ENCODE measurements at regions of chr15 and their contacts with region 1.

Region 1: GRCh38 chr15:83011271-83012075 is at the start of gene C15orf40:
- DNase-seq: peak; percentile 89
- ATAC-seq: peak; percentile 88
- H3K4me3 Mint-ChIP-seq: peak within 1 kb of the TSS; percentile 97
- H3K27ac Mint-ChIP-seq: peak within 1 kb of the TSS; percentile 87
- H3K4me1 Mint-ChIP-seq: peaks cover 40% of the 10 kb centered on the region
- H3K27me3 Mint-ChIP-seq: no peaks in the 10 kb centered on the region
- CTCF ChIP-seq: no peak
- total RNA-seq, gene C15orf40: 33.3 and 41.9 TPM in 2 replicates

Region 2: GRCh38 chr15:82540055-82540983 is 471.2 kb before region 1 on chr15 and contains the start of gene RPS17:
- CTCF ChIA-PET with region 1: interaction called, 9 read pairs
- POLR2A ChIA-PET with region 1: interaction called, 37 read pairs
- intact Hi-C with region 1: loop called (anchors 1 kb)
- DNase-seq: peak; percentile 100
- ATAC-seq: peak; percentile 95
- H3K4me3 Mint-ChIP-seq: peak within 1 kb of the TSS; percentile 98
- H3K27ac Mint-ChIP-seq: peak within 1 kb of the TSS; percentile 97
- H3K4me1 Mint-ChIP-seq: peaks cover 34% of the 10 kb centered on the region
- H3K27me3 Mint-ChIP-seq: peaks cover 3% of the 10 kb centered on the region
- CTCF ChIP-seq: peak; percentile 88
- total RNA-seq, gene RPS17: 3,227 and 3,822 TPM in 2 replicates

Region 3: GRCh38 chr15:82749951-82750830 is 261.3 kb before region 1 on chr15:
- CTCF ChIA-PET with region 1: interaction called, 9 read pairs
- POLR2A ChIA-PET with region 1: interaction called, 11 read pairs
- intact Hi-C with region 1: loop called (anchors 1 kb)
- DNase-seq: peak; percentile 76
- ATAC-seq: peak; percentile 95
- H3K4me3 Mint-ChIP-seq: peak overlapping the region; percentile 100
- H3K27ac Mint-ChIP-seq: peak overlapping the region; percentile 94
- H3K4me1 Mint-ChIP-seq: peaks cover 44% of the 10 kb centered on the region
- H3K27me3 Mint-ChIP-seq: no peaks in the 10 kb centered on the region
- CTCF ChIP-seq: no peak

Region 4: DNA sequence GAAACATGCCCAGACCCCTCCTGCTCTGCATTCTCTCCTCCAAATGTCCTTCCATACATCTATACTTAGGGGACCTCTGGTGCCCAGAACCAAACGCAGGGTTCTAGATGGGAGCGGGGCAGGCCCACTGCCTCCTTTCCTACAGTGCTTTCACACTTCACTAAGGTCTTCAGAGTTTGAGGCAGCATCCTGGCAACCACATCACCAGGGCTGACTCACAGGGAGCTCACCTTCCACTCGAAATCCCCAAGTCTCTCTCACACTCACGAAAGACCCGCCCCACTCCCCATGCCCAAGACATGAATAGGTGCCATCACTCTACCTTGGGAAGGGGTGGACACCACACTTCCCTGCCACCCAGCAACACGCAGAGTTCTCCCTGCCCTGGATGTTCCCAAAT is 77.9 kb before region 1 on chr15:
- CTCF ChIA-PET with region 1: no interaction called
- POLR2A ChIA-PET with region 1: no interaction called
- intact Hi-C with region 1: no loop called
- DNase-seq: no peak
- ATAC-seq: no peak
- H3K4me3 Mint-ChIP-seq: no peak overlapping the region
- H3K27ac Mint-ChIP-seq: no peak overlapping the region
- H3K4me1 Mint-ChIP-seq: no peaks in the 10 kb centered on the region
- H3K27me3 Mint-ChIP-seq: no peaks in the 10 kb centered on the region
- CTCF ChIP-seq: no peak

Region 5: GRCh38 chr15:82985688-82986441 is 25.6 kb before region 1 on chr15 and contains the start of gene RAMAC:
- CTCF ChIA-PET with region 1: interaction called, 12 read pairs
- POLR2A ChIA-PET with region 1: interaction called, 32 read pairs
- intact Hi-C with region 1: loop called (anchors 1 kb)
- DNase-seq: peak; percentile 79
- ATAC-seq: peak; percentile 95
- H3K4me3 Mint-ChIP-seq: peak within 1 kb of the TSS; percentile 99
- H3K27ac Mint-ChIP-seq: peak within 1 kb of the TSS; percentile 92
- H3K4me1 Mint-ChIP-seq: peaks cover 23% of the 10 kb centered on the region
- H3K27me3 Mint-ChIP-seq: no peaks in the 10 kb centered on the region
- CTCF ChIP-seq: no peak
- total RNA-seq, gene RAMAC: 23.4 and 24.7 TPM in 2 replicates

Region 6: DNA sequence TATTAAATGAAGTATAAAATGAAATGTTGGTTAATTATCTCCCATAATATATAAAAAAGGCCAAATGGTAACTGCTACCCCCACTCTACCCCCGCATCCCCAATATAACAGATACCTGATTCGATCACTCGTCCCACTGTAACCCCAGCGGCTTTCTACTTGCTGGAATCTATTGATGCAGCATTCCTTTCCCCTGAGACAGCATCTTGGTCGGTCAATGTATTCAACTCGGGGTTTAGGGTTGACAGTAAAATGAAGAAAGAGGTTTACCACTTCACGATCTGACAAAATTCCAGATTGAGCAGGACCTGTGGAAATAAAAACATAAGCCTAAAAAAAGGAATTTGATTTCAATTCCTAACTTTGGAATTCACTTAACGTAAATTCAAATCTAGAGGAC is 18.5 kb after region 1 on chr15:
- CTCF ChIA-PET with region 1: interaction called, 3 read pairs
- POLR2A ChIA-PET with region 1: interaction called, 16 read pairs
- intact Hi-C with region 1: no loop called
- DNase-seq: no peak
- ATAC-seq: no peak
- H3K4me3 Mint-ChIP-seq: no peak overlapping the region
- H3K27ac Mint-ChIP-seq: no peak overlapping the region
- H3K4me1 Mint-ChIP-seq: no peaks in the 10 kb centered on the region
- H3K27me3 Mint-ChIP-seq: no peaks in the 10 kb centered on the region
- CTCF ChIP-seq: no peak

Region 7: GRCh38 chr15:83066734-83067637 is 55.5 kb after region 1 on chr15 and contains the start of gene BTBD1:
- CTCF ChIA-PET with region 1: interaction called, 4 read pairs
- POLR2A ChIA-PET with region 1: interaction called, 24 read pairs
- intact Hi-C with region 1: loop called (anchors 2 kb)
- DNase-seq: peak; percentile 86
- ATAC-seq: peak; percentile 92
- H3K4me3 Mint-ChIP-seq: peak within 1 kb of the TSS; percentile 87
- H3K27ac Mint-ChIP-seq: peak within 1 kb of the TSS; percentile 73
- H3K4me1 Mint-ChIP-seq: peaks cover 9% of the 10 kb centered on the region
- H3K27me3 Mint-ChIP-seq: no peaks in the 10 kb centered on the region
- CTCF ChIP-seq: no peak
- total RNA-seq, gene BTBD1: 47.9 and 54.2 TPM in 2 replicates

Region 8: GRCh38 chr15:83207622-83208411 is 196.3 kb after region 1 on chr15 and contains the start of gene HDGFL3:
- CTCF ChIA-PET with region 1: no interaction called
- POLR2A ChIA-PET with region 1: no interaction called
- intact Hi-C with region 1: loop called (anchors 1 kb)
- DNase-seq: peak; percentile 23
- ATAC-seq: peak; percentile 57
- H3K4me3 Mint-ChIP-seq: peak within 1 kb of the TSS; percentile 84
- H3K27ac Mint-ChIP-seq: no peak within 1 kb of the TSS
- H3K4me1 Mint-ChIP-seq: peaks cover 7% of the 10 kb centered on the region
- H3K27me3 Mint-ChIP-seq: peaks cover 16% of the 10 kb centered on the region
- CTCF ChIP-seq: no peak
- total RNA-seq, gene HDGFL3: 1.8 and 3.5 TPM in 2 replicates

Measured in activated B cell treated with CpG ODN at 0.5 μM for 24 hours (primary cell).